Panc1 (cell line): ENCODE measurements at regions of chr20 and their contacts with region 1.

Region 1: GRCh38 chr20:17968366-17969279 is at the starts of genes MGME1 and SNX5:
- DNase-seq: peak; percentile 98
- ATAC-seq: peak; percentile 95
- H3K4me3 ChIP-seq: peak within 1 kb of the TSS; percentile 95 to 97
- H3K27ac ChIP-seq: peak within 1 kb of the TSS; percentile 83
- H3K4me1 ChIP-seq: peaks cover 40% of the 10 kb centered on the region
- H3K27me3 ChIP-seq: no peaks in the 10 kb centered on the region
- CTCF ChIP-seq: no peak
- total RNA-seq, gene MGME1: 27.0 TPM
- total RNA-seq, gene SNX5: 90.8 TPM

Region 2: DNA sequence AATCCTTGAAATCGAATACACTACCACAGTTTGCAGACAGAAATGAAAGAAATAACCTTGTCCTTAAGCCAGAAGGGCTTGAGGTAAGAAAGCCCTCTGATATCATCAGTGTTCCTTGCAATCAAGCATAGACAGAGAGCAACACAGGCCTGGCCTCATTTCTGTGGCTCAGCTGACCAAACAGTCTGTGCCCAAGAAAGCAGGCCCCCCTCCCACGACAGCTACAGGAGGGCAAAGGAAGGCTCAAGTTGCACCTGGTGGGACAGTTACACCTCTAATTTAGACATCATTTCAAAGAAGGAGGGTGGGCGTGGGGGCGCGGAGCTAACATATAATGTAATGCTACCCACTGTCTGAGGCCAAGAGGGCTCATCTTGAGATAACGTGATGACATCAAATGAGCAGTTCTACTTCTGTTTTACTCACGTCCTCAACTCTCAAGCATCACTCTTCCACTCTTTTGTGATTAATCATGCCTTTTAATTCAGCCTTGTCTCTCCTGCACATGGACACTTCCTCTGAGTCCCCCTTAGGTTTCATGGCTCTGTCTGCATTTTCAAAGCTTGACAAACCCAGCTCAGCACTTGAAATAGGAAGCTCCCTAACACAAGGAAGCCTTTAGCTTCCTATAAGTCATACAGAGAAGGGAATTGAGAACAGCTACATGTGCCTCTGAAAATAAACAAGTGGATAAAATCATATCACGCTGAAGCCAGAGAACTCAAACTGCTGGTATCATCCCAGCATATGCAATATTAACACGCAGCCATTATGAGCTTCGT is 1416.8 kb before region 1 on chr20:
- CTCF ChIA-PET with region 1: no interaction called
- POLR2A ChIA-PET with region 1: interaction called, 17 read pairs
- in situ Hi-C with region 1: no loop called
- intact Hi-C with region 1: no loop called
- DNase-seq: no peak
- ATAC-seq: no peak
- H3K4me3 ChIP-seq: no peak overlapping the region
- H3K27ac ChIP-seq: no peak overlapping the region
- H3K4me1 ChIP-seq: peaks cover 3% of the 10 kb centered on the region; the same call in 1 of the 2 replicates
- H3K27me3 ChIP-seq: no peaks in the 10 kb centered on the region
- CTCF ChIP-seq: no peak

Region 3: DNA sequence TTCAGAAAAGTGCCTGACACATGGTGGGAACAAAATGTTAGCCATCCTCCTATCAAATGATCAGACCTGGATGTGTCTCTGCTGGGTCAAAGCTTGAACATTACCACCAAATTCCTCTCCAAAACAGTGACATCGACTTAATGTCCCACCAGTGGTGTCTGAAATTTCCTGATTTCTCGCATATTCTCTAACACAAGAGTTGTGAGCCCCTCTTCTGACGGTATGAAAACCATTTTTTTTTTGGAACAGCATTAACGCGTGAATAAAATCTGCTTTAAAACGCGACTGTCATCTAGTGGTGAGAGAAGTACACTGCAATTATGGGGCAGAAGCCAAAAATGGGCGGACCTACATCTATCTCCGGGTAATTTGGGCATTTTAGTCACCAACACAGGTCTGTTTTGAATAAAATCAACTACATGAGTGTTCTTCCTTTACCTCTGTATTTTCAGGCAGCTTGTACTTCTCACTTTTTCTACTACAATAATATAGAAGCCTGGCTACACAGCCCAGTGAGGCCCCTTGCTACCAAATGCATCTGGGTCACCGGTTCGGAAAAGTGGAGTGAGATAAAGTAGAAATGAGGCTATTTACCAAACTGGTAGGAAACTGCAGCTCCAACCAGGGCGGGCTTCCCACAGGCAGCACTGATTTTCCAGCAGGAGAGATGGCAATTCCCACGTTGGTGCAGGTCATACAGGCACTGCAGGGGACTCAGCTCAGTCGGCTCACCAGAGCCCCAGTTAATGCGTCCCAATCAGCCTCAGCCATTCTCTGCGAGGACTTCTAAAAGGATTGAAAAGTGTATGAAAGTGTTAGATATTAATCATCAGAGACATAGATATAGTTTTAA is 27.6 kb after region 1 on chr20:
- CTCF ChIA-PET with region 1: no interaction called
- POLR2A ChIA-PET with region 1: interaction called, 17 read pairs
- in situ Hi-C with region 1: no loop called
- intact Hi-C with region 1: no loop called
- DNase-seq: no peak
- ATAC-seq: peak; percentile 80
- H3K4me3 ChIP-seq: peak overlapping the region in 1 of 2 experiments; percentile 31; a peak in 2 of 4 replicates
- H3K27ac ChIP-seq: no peak overlapping the region
- H3K4me1 ChIP-seq: no peaks in the 10 kb centered on the region; the same call in 1 of the 2 replicates
- H3K27me3 ChIP-seq: no peaks in the 10 kb centered on the region
- CTCF ChIP-seq: peak; percentile 98